HEK293 (cell line): ENCODE measurements at regions of chr5 and their contacts with region 1.

Region 1: DNA sequence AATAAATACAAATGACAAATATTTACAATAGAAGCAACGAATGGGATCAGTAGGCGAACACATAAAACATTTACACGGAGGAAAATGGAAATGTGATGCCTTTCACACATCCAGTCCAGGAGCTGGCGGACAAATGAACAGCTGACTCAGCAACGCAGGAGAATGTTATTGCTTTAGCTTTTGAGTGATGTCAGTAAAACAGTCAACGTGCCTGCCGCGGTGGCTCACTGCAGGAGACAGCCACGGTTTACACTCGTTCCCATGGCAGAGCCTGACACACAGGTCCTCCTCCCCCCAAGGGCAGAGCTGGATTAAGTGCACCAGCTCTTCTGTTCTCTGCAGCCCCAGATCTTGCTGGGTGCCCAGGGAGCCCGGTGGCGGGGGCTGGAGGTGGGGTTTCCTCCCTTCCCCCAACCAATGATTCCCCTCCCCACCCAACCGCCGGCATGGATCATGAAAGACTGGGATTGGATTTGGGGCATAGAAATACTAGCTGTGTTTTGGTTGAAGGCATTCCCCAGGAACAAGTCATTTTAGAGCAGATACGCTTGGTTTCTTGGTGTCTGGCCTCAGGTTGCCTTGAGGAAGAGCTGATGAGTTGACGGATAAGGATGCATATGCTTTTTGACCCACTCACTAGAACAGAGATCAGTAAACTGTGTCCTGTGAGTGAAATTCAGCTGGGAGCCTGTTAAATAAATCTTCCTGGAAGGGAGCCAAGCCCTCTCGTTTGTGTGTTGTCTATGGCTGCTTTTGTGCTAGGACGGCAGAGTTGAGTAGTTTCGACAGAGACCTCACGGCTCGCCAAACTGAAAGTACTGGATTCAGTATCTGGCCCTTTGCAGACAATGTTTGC is 12.5 kb downstream of the STC2 start:
- H3K4me3 ChIP-seq: no peak overlapping the region
- H3K27ac ChIP-seq: peak overlapping the region; percentile 74
- H3K4me1 ChIP-seq: peaks cover 20% of the 10 kb centered on the region
- CTCF ChIP-seq: no peak

Region 2: DNA sequence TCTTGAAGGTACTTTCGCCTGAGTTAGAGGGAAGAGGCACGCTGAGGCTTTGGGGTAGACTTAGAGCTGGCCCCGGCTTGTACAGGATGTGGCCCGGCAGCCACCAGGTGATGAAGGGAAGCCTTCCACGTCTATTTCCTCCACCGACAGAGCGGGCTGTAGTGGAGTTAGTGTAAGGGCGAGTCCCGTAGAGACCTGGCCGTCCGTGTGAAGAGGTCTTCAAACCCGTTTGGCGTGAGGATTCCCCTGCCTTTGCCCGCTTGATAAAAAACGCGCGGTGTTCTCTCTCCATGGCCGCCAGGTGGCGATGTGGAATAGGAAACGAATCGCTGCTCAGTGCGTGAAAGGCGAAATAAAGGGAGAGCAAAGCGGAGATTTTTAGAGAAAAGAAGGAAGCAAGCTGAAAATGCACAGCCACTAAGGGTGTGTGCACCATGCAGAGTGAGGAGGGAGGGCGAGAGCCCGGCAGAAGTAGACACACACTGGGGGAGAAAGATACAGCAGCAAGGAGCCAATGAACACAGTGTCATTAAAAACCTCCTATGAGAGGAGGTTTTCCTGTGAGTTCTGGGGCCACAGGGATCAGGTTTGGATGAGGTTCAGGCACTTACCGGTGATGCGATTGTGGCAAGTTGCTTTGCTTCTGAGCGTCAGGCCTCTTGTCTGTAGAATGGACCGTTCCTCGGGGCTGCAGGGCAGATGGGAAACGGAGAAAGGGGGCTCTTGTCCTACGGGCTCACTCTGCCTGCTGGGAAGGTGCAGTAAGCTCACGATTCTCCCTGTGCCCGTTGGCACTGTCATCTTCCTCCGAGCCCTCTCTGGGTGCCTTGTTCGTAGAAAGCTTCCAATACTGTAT is 21.7 kb before region 1 on chr5:
- CTCF ChIA-PET with region 1: interaction called, 10 read pairs
- POLR2A ChIA-PET with region 1: interaction called, 20 read pairs
- H3K4me3 ChIP-seq: no peak overlapping the region
- H3K27ac ChIP-seq: no peak overlapping the region
- H3K4me1 ChIP-seq: peaks cover 4% of the 10 kb centered on the region; the same call in 1 of the 2 replicates
- CTCF ChIP-seq: peak; percentile 94

Region 3: GRCh38 chr5:173302547-173303066 is 13.1 kb before region 1 on chr5:
- CTCF ChIA-PET with region 1: interaction called, 8 read pairs
- POLR2A ChIA-PET with region 1: interaction called, 11 read pairs
- H3K4me3 ChIP-seq: no peak overlapping the region
- H3K27ac ChIP-seq: no peak overlapping the region
- H3K4me1 ChIP-seq: peaks cover 13% of the 10 kb centered on the region
- CTCF ChIP-seq: no peak